HCT116 (cell line): ENCODE measurements at regions of chr1 and their contacts with region 1.

Region 1: GRCh38 chr1:234309598-234310459 is 63.4 kb upstream of the COA6 start:
- DNase-seq: peak; percentile 38
- ATAC-seq: peak; percentile 96
- H3K4me3 ChIP-seq: no peak overlapping the region
- H3K27ac ChIP-seq: no peak overlapping the region
- H3K4me1 ChIP-seq: 0 out of 4 replicates have a peak, but pooled peaks cover 0 to under 1% of the 10 kb centered on the region in 2 experiments
- H3K27me3 ChIP-seq: no peaks in the 10 kb centered on the region
- CTCF ChIP-seq: peak; percentile 77 to 92 (median 91)
- POLR2A ChIP-seq: no peak
- RAD21 ChIP-seq: peak; percentile 75

Region 2: DNA sequence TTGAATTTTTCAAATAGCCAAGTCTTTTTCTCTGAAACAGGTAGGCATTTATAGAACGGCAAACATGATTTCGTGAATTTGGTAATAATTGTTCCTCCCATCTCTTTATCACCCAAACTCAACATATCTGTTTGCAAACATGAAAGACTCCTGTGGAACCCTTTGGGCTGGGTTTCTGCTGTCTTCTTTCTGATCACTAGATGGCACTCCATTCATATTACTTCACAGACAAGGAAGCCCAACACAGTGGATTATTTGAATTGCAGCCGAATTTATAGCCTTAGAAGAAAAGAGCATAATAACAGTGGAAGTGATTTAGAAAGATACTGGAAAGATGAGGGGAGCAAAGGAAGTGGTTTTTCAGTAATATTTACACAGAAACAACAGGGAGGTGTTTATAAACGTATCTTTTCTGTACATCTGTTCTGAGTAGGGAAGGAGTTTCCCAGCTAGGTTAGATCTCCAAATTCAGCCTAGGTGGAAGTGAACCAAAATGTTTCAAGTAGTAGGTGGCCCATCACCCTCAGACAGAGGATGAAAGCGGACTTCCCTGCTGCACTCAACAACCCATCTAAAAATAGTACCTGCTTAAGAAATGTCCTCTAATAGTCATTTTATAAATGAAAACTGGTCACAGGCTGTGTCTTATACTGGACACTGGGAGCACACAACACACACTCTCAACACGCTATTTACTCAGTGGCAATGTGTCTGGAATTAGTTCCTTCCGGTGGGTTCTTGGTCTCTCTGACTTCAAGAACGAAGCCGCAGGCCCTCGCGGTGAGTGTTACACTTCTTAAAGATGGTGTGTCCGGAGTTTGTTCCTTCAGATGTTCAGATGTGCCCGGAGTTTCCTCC is 914.7 kb before region 1 on chr1:
- CTCF ChIA-PET with region 1: no interaction called
- POLR2A ChIA-PET with region 1: no interaction called
- RAD21 ChIA-PET with region 1: no interaction called
- intact Hi-C with region 1: loop called (anchors 2 kb)
- DNase-seq: peak; percentile 54
- ATAC-seq: peak; percentile 97
- H3K4me3 ChIP-seq: no peak overlapping the region
- H3K27ac ChIP-seq: no peak overlapping the region
- H3K4me1 ChIP-seq: no peaks in the 10 kb centered on the region
- H3K27me3 ChIP-seq: no peaks in the 10 kb centered on the region
- CTCF ChIP-seq: peak; percentile 86 to 92 (median 86); a peak in 5 of 6 replicates
- POLR2A ChIP-seq: no peak
- RAD21 ChIP-seq: peak; percentile 93

Region 3: DNA sequence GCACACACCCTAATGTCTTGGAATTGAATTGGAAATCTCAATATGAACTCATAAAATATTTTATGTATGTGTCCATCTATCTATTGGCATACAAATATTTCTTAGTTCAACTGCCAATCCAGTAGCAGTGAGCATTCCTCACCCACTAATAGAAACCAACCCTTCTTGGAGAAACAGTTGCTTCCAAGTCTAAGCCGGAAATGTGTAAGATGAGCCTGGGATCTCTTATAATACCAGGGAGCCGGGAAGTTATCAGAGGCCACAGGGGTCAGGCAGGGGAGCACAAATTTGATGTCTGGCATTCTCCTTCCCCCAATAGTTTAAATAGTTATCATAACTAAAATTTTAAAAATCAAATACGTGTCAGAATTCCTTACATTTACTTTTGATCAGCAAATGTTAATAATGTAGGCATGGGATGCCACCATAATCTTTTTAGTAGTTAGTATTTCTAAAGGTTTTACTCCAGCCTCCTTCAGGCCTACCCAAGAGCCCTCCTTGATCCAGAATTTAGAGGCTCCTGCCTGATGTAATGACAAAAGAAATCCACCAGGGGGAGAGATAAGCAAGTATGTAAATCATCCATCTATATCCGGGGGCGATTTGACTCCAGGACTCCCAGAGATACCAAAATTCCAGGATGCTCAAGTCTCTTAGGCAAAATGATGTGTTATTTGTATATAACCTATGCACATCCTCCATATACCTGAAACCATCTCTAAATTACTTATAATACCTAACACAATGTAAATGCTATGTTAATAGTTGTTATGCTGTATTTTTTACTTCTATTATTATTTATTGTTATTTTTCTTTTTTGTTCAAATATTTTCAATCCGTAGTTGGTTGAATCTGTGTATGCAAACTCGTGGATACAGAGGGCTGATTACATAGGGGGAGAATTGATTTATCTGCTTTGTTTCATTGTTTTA is 155.2 kb before region 1 on chr1:
- CTCF ChIA-PET with region 1: interaction called, 4 read pairs
- POLR2A ChIA-PET with region 1: no interaction called
- RAD21 ChIA-PET with region 1: no interaction called
- intact Hi-C with region 1: loop called (anchors 1 kb)
- DNase-seq: peak; percentile 70
- ATAC-seq: peak; percentile 98
- H3K4me3 ChIP-seq: no peak overlapping the region
- H3K27ac ChIP-seq: no peak overlapping the region
- H3K4me1 ChIP-seq: no peaks in the 10 kb centered on the region
- H3K27me3 ChIP-seq: no peaks in the 10 kb centered on the region
- CTCF ChIP-seq: peak; percentile 68 to 82 (median 78)
- POLR2A ChIP-seq: no peak
- RAD21 ChIP-seq: peak; percentile 83

Region 4: GRCh38 chr1:234230414-234230862 is 79.4 kb before region 1 on chr1:
- CTCF ChIA-PET with region 1: no interaction called
- POLR2A ChIA-PET with region 1: no interaction called
- RAD21 ChIA-PET with region 1: no interaction called
- intact Hi-C with region 1: no loop called
- DNase-seq: no peak
- ATAC-seq: no peak
- H3K4me3 ChIP-seq: no peak overlapping the region
- H3K27ac ChIP-seq: no peak overlapping the region
- H3K4me1 ChIP-seq: no peaks in the 10 kb centered on the region
- H3K27me3 ChIP-seq: no peaks in the 10 kb centered on the region
- CTCF ChIP-seq: no peak
- POLR2A ChIP-seq: no peak
- RAD21 ChIP-seq: no peak

Region 5: GRCh38 chr1:234326497-234327366 is 16.9 kb after region 1 on chr1:
- CTCF ChIA-PET with region 1: interaction called, 20 read pairs
- POLR2A ChIA-PET with region 1: no interaction called
- RAD21 ChIA-PET with region 1: no interaction called
- intact Hi-C with region 1: no loop called
- DNase-seq: peak; percentile 19
- ATAC-seq: peak; percentile 92
- H3K4me3 ChIP-seq: no peak overlapping the region
- H3K27ac ChIP-seq: no peak overlapping the region
- H3K4me1 ChIP-seq: no peaks in the 10 kb centered on the region
- H3K27me3 ChIP-seq: no peaks in the 10 kb centered on the region
- CTCF ChIP-seq: peak; percentile 68 to 88 (median 82)
- POLR2A ChIP-seq: no peak
- RAD21 ChIP-seq: peak; percentile 70